PC-9 (cell line): ENCODE measurements at regions of chr4 and their contacts with region 1.

Region 1: GRCh38 chr4:2526559-2526958 is 9.9 kb upstream of the FAM193A start:
- DNase-seq: no peak
- H3K4me3 ChIP-seq: no peak overlapping the region
- H3K27ac ChIP-seq: no peak overlapping the region
- H3K4me1 ChIP-seq: no peaks in the 10 kb centered on the region
- H3K27me3 ChIP-seq: no peaks in the 10 kb centered on the region
- CTCF ChIP-seq: no peak

Region 2: GRCh38 chr4:2220016-2220630 is 306.4 kb before region 1 on chr4:
- CTCF ChIA-PET with region 1: interaction called, 4 read pairs
- POLR2A ChIA-PET with region 1: interaction called, 14 read pairs
- intact Hi-C with region 1: no loop called
- DNase-seq: peak; percentile 60 to 73
- H3K4me3 ChIP-seq: no peak overlapping the region
- H3K27ac ChIP-seq: no peak overlapping the region
- H3K4me1 ChIP-seq: peaks cover 14% of the 10 kb centered on the region
- H3K27me3 ChIP-seq: no peaks in the 10 kb centered on the region
- CTCF ChIP-seq: peak; percentile 89

Region 3: DNA sequence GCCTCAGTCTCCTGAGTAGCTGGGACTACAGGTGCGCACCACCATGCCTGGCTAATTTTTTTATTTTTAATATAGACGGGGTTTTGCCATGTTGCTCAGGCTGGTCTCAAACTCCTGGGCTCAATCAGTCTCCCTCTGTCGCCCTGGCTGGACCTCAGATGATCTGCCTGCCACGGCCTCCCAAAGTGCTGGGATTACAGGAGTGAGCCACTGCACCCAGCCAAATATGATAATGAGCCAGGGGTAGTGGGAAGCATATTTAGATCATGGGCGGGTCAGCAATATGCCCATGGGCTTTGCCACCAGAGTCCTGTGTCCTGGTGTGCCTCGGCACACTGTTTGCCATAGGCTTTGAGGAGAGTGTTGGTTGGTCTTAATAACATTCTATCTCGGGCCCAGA is 81.7 kb after region 1 on chr4:
- CTCF ChIA-PET with region 1: no interaction called
- POLR2A ChIA-PET with region 1: no interaction called
- intact Hi-C with region 1: no loop called
- DNase-seq: no peak
- H3K4me3 ChIP-seq: no peak overlapping the region
- H3K27ac ChIP-seq: no peak overlapping the region
- H3K4me1 ChIP-seq: no peaks in the 10 kb centered on the region
- H3K27me3 ChIP-seq: no peaks in the 10 kb centered on the region
- CTCF ChIP-seq: no peak

Region 4: DNA sequence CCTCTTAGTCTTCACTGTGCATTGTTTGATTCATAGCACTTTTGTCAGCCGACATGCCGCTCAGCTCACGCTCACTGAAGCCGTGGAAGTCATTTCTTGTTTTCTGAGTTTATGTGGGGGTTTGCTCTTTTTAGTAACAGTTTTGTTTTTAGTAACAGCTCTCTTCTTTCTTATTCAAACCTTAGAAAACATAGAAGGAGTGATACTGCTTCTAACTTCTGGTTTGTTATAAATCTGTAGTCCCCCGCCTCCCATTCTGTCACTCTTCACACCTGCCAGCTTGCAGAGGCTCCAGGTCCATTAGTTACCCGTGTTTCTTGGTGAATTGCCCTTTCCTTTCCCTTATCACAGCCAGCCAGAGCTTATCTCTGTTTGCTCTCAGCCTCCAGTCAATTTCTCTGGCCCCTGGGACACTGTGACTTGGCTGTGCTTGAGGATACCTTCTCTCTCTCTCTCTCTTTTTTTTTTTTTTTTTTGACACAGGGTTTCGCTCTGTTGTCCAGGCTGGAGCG is 487.3 kb after region 1 on chr4:
- CTCF ChIA-PET with region 1: no interaction called
- POLR2A ChIA-PET with region 1: no interaction called
- intact Hi-C with region 1: no loop called
- DNase-seq: no peak
- H3K4me3 ChIP-seq: no peak overlapping the region
- H3K27ac ChIP-seq: no peak overlapping the region
- H3K4me1 ChIP-seq: peaks cover 17% of the 10 kb centered on the region; the same call in 1 of the 2 replicates
- H3K27me3 ChIP-seq: no peaks in the 10 kb centered on the region
- CTCF ChIP-seq: no peak